Mammary epithelial cell (primary cell): ENCODE measurements at regions of chr19 and their contacts with region 1.

Region 1: GRCh38 chr19:47284324-47284899 is 9.7 kb downstream of the INAFM1 start:
- DNase-seq: peak; percentile 37
- H3K4me3 ChIP-seq: no peak overlapping the region
- H3K27ac ChIP-seq: no peak overlapping the region
- H3K4me1 ChIP-seq: peaks cover 6% of the 10 kb centered on the region
- H3K27me3 ChIP-seq: no peaks in the 10 kb centered on the region
- CTCF ChIP-seq: peak; percentile 77 to 90

Region 2: GRCh38 chr19:47305309-47305751 is 20.9 kb after region 1 on chr19:
- CTCF ChIA-PET with region 1: no interaction called
- dilution Hi-C with region 1: no loop called
- in situ Hi-C with region 1: no loop called
- intact Hi-C with region 1: loop called (anchors 1 kb)
- DNase-seq: peak; percentile 67
- H3K4me3 ChIP-seq: no peak overlapping the region
- H3K27ac ChIP-seq: no peak overlapping the region
- H3K4me1 ChIP-seq: no peaks in the 10 kb centered on the region
- H3K27me3 ChIP-seq: no peaks in the 10 kb centered on the region
- CTCF ChIP-seq: peak; percentile 96 to 97

Region 3: DNA sequence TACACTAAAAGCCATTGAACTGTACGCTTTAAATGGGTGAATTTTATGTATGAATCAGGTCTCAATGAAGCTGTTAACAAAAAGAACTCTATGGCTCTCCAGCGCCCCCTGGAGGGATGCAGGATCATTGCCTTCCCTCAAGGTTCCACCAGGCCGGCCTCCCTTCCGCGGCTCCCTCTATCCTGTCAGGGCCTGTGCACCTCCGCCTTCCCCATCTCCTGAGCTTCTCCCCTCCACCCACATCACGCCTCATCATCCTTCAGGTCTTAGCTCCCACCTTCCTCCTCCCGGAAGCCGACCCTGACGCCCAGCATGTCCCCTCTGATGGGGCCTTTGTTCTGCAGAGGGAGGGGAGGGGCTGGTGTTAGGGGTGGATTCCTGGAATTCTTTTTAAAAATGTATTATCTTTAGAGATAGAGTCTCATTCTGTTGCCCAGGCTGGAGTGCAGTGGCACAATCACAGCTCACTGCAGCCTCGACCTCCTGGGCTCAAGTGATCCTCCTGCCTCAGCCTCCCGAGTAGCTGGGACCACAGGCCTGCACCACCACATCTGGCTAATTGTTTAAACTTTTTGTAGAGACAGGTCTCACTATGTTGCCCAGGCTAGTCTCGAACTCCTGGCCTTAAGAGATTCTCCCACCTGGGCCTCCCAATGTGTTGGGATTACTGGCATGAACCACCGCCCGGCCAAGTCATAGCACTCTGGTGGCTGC is 107.3 kb after region 1 on chr19:
- CTCF ChIA-PET with region 1: no interaction called
- dilution Hi-C with region 1: no loop called
- in situ Hi-C with region 1: no loop called
- intact Hi-C with region 1: loop called (anchors 1 kb)
- DNase-seq: peak; percentile 51
- H3K4me3 ChIP-seq: no peak overlapping the region
- H3K27ac ChIP-seq: no peak overlapping the region
- H3K4me1 ChIP-seq: no peaks in the 10 kb centered on the region
- H3K27me3 ChIP-seq: no peaks in the 10 kb centered on the region
- CTCF ChIP-seq: peak; percentile 90 to 91